PC-3 (cell line): ENCODE measurements at regions of chr11 and their contacts with region 1.

Region 1: DNA sequence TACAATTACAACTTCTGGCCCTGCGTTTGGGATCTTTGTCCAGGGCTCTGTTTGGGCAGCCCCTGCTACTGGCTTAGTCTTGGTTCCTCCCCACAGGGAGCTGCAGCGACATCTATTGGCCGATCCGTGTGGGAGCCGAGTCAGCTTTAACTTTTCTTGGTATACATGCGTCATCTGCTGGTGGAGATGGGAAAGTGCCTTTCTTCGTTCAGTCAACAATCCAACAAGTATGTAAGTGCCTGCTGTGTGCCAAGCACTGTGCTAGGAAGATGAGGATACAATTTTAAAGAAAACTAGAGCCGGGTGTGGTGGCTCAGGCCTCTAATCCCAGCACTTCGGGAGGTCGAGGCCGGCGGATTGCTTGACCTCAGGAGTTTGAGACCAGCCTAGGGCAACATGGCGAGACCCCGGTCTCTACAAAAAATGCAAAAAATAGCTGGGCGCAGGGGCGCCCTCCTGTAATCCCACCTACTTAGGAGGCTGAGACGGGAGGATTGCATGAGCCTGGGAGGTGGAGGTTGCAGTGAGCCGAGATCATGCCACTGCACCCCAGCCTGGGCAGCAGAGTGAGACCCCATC is 8.2 kb downstream of the TPBGL start:
- DNase-seq: peak; percentile 97
- ATAC-seq: peak; percentile 93
- H3K4me3 ChIP-seq: no peak overlapping the region
- H3K27ac ChIP-seq: no peak overlapping the region
- H3K4me1 ChIP-seq: no peaks in the 10 kb centered on the region
- H3K27me3 ChIP-seq: peaks cover 22% of the 10 kb centered on the region
- CTCF ChIP-seq: peak; percentile 100

Region 2: DNA sequence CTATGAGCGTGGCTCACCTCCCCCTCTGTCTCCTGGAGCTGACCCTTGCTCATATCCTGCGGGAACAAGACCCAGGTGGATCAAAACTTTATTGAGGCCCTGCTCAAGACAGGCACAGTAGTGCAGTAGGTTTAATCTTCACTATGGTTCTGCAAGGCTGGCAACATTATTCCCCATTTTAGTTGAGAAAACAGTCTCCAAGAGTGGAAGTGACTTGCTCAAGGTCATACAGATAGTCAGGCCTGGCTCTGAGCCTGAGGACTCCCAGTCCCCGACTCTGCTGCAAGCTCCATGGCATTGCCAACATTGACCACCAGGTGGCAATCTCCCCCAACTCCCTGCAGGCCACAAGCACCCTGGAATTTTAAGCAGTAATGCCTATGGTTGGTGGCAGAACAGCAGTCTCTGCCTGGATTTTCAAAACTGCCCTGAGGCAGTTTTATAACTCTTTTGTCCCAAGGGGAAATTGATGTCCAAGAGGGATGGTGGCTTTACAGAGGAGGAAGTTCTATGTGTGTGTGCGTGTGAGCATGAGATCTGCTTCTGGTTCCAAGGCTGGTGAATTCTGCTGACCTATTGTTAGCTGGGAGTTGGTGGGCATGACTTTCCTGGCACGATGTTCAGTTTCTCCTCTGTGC is 225.9 kb before region 1 on chr11:
- CTCF ChIA-PET with region 1: interaction called, 13 read pairs
- POLR2A ChIA-PET with region 1: no interaction called
- intact Hi-C with region 1: loop called (anchors 1 kb)
- DNase-seq: peak; percentile 93
- ATAC-seq: peak; percentile 98
- H3K4me3 ChIP-seq: no peak overlapping the region
- H3K27ac ChIP-seq: no peak overlapping the region
- H3K4me1 ChIP-seq: no peaks in the 10 kb centered on the region
- H3K27me3 ChIP-seq: no peaks in the 10 kb centered on the region
- CTCF ChIP-seq: peak; percentile 99

Region 3: GRCh38 chr11:75133976-75134375 is 114.8 kb before region 1 on chr11:
- CTCF ChIA-PET with region 1: interaction called, 10 read pairs
- POLR2A ChIA-PET with region 1: no interaction called
- intact Hi-C with region 1: no loop called
- DNase-seq: no peak
- ATAC-seq: no peak
- H3K4me3 ChIP-seq: no peak overlapping the region
- H3K27ac ChIP-seq: no peak overlapping the region
- H3K4me1 ChIP-seq: no peaks in the 10 kb centered on the region
- H3K27me3 ChIP-seq: peaks cover 72% of the 10 kb centered on the region
- CTCF ChIP-seq: no peak

Region 4: GRCh38 chr11:75204685-75205563 is 43.9 kb before region 1 on chr11:
- CTCF ChIA-PET with region 1: interaction called, 13 read pairs
- POLR2A ChIA-PET with region 1: no interaction called
- intact Hi-C with region 1: no loop called
- DNase-seq: peak; percentile 91
- ATAC-seq: peak; percentile 100
- H3K4me3 ChIP-seq: no peak overlapping the region
- H3K27ac ChIP-seq: no peak overlapping the region
- H3K4me1 ChIP-seq: no peaks in the 10 kb centered on the region
- H3K27me3 ChIP-seq: peaks cover 44% of the 10 kb centered on the region
- CTCF ChIP-seq: peak; percentile 98